ENCODE measurements at regions of chr1 and their contacts with region 1.

Region 1: DNA sequence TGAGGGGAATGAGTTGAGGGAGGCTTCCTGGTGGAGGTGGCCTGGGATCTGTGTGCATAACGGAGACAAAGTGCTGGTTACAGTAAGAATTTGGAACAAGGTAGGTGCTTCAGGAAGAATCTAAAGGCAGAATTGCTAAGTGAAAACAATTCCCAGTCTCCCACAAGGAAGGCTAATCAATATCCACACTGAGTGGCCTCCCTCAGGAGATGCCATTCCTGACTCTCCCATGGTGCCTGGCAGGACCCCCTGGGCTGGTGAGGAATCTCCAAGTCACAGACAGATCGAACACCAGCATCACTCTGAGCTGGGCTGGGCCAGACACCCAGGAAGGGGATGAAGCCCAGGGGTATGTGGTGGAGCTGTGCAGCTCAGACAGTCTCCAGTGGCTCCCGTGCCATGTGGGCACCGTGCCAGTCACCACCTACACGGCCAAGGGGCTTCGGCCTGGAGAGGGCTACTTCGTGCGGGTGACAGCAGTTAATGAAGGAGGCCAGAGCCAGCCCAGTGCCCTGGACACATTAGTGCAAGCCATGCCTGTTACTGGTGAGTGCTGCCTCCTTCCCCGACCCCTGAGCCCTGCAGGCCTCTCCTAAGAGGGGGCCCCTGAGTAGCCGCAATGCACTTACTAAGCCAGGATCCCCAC is 30.7 kb downstream of the IGFN1 start:
- DNase-seq: peak; percentile 7
- H3K4me3 Mint-ChIP-seq: no peak overlapping the region
- H3K27ac Mint-ChIP-seq: no peak overlapping the region
- H3K4me1 Mint-ChIP-seq: no peaks in the 10 kb centered on the region
- H3K27me3 Mint-ChIP-seq: no peaks in the 10 kb centered on the region

Region 2: GRCh38 chr1:201016211-201016651 is 205.1 kb before region 1 on chr1:
- CTCF ChIA-PET with region 1: no interaction called
- POLR2A ChIA-PET with region 1: no interaction called
- intact Hi-C with region 1: no loop called
- DNase-seq: no peak
- H3K4me3 Mint-ChIP-seq: no peak overlapping the region
- H3K27ac Mint-ChIP-seq: peak overlapping the region; percentile 87
- H3K4me1 Mint-ChIP-seq: peaks cover 94% of the 10 kb centered on the region
- H3K27me3 Mint-ChIP-seq: no peaks in the 10 kb centered on the region

Region 3: GRCh38 chr1:201085916-201086735 is 135.2 kb before region 1 on chr1:
- CTCF ChIA-PET with region 1: no interaction called
- POLR2A ChIA-PET with region 1: no interaction called
- intact Hi-C with region 1: loop called (anchors 2 kb)
- DNase-seq: peak; percentile 64
- H3K4me3 Mint-ChIP-seq: no peak overlapping the region
- H3K27ac Mint-ChIP-seq: peak overlapping the region; percentile 21
- H3K4me1 Mint-ChIP-seq: no peaks in the 10 kb centered on the region
- H3K27me3 Mint-ChIP-seq: peaks cover 5% of the 10 kb centered on the region

Region 4: GRCh38 chr1:201149400-201149799 is 71.9 kb before region 1 on chr1:
- CTCF ChIA-PET with region 1: interaction called, 37 read pairs
- POLR2A ChIA-PET with region 1: no interaction called
- intact Hi-C with region 1: loop called (anchors 1 kb)
- DNase-seq: no peak
- H3K4me3 Mint-ChIP-seq: no peak overlapping the region
- H3K27ac Mint-ChIP-seq: no peak overlapping the region
- H3K4me1 Mint-ChIP-seq: peaks cover 15% of the 10 kb centered on the region
- H3K27me3 Mint-ChIP-seq: no peaks in the 10 kb centered on the region

Region 5: DNA sequence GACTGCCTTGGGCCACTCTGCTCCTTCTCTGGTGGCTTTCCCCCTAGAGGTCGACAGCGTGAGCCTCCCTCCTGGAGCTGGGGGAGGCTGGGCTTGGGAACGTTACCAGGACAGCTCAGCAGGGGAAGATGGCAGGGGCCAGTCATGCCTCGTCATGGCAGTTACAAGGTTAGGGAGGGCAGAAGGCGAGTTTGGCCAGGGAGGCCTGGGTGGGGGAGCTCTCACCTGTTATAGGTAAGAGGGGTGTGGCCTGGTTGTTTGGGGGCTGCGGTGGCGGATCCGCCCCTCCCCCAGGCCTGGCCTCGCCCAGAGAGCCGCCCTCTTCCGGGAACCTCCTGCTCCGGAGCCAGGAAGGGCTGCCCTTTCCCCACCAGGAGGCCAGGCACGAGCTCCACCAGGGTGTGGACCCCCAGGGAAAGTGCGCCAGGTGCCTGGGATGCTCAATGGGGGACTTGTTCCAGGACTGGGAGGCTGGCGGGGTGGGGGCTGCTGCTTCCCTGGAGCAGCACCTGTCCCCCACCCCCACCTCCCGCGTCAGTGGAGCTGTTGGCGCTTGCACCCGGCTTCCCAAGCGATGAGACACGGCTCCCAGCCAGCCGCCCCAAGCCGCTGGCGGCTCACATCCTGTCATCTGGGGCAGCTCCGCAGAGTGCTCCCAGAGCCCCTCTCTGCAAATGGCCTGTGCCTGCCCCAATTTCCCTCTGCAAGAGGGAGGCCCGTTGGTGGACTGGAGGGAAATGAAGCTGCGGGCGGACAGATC is 38.3 kb after region 1 on chr1:
- CTCF ChIA-PET with region 1: no interaction called
- POLR2A ChIA-PET with region 1: no interaction called
- intact Hi-C with region 1: no loop called
- DNase-seq: peak; percentile 6
- H3K4me3 Mint-ChIP-seq: no peak overlapping the region
- H3K27ac Mint-ChIP-seq: no peak overlapping the region
- H3K4me1 Mint-ChIP-seq: no peaks in the 10 kb centered on the region
- H3K27me3 Mint-ChIP-seq: peaks cover 14% of the 10 kb centered on the region